ENCODE measurements at regions of chr5 and their contacts with region 1.

Region 1: DNA sequence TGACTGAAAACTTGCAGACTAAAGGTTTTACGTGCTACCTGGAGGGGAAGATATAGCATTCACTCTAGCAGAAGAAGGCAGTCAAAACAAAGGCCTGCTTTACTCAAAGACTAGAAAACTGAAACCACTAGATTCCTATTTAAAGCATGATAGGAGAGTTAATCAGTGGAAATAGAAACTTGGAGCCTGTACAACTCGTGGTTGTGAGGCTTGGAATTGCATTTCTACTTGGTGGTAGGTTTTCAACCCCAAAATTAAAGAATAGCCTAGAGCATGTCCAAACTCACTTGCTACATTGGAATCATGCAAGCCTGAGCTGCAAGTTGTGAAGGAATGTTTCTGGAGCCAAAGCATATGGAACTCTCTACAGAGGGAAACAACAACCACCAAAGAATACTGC is 1526.4 kb upstream of the NUDT12 start:
- DNase-seq: no peak
- ATAC-seq: no peak
- H3K4me3 ChIP-seq: no peak overlapping the region
- H3K27ac ChIP-seq: no peak overlapping the region
- H3K4me1 ChIP-seq: no peaks in the 10 kb centered on the region
- H3K27me3 ChIP-seq: no peaks in the 10 kb centered on the region
- CTCF ChIP-seq: no peak
- EP300 ChIP-seq: no peak
- POLR2A ChIP-seq: no peak
- RAD21 ChIP-seq: no peak

Region 2: DNA sequence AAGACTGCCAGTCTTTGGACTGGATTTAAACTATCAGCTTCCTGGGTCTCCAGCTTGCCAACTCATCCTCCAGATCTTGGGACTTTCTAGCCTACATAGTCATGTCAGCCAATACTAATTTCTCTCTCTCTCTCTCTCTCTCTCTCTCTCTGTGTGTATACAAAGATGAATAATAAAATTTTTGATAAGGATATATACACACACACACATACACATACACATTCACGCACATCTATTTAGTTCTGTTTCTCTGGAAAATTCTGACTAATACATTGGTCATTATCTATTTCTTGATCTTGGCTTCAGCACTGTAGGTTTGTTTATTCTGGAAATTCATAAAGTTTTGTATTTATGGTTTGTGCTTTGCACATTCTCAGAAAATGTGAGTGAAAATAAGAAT is 79.8 kb after region 1 on chr5:
- CTCF ChIA-PET with region 1: no interaction called
- POLR2A ChIA-PET with region 1: no interaction called
- RAD21 ChIA-PET with region 1: no interaction called
- SMC1A ChIA-PET with region 1: no interaction called
- in situ Hi-C with region 1: loop called (anchors 5 kb)
- intact Hi-C with region 1: no loop called
- DNase-seq: no peak
- ATAC-seq: no peak
- H3K4me3 ChIP-seq: no peak overlapping the region
- H3K27ac ChIP-seq: no peak overlapping the region
- H3K4me1 ChIP-seq: no peaks in the 10 kb centered on the region
- H3K27me3 ChIP-seq: no peaks in the 10 kb centered on the region
- CTCF ChIP-seq: no peak
- EP300 ChIP-seq: no peak
- POLR2A ChIP-seq: no peak
- RAD21 ChIP-seq: no peak